ENCODE measurements at regions of chr2 and their contacts with region 1.

Region 1: GRCh38 chr2:113080134-113080533 is 12.4 kb downstream of the IL1F10 start:
- DNase-seq: peak; percentile 75
- H3K4me3 ChIP-seq: no peak overlapping the region
- H3K27ac ChIP-seq: no peak overlapping the region
- H3K4me1 ChIP-seq: peaks cover 12% of the 10 kb centered on the region
- H3K27me3 ChIP-seq: peaks cover 16% of the 10 kb centered on the region; the same call in 1 of the 2 replicates

Region 2: GRCh38 chr2:112588566-112589045 is 491.5 kb before region 1 on chr2:
- in situ Hi-C with region 1: no loop called
- DNase-seq: no peak
- H3K4me3 ChIP-seq: no peak overlapping the region
- H3K27ac ChIP-seq: no peak overlapping the region
- H3K4me1 ChIP-seq: peaks cover 10% of the 10 kb centered on the region
- H3K27me3 ChIP-seq: no peaks in the 10 kb centered on the region

Region 3: DNA sequence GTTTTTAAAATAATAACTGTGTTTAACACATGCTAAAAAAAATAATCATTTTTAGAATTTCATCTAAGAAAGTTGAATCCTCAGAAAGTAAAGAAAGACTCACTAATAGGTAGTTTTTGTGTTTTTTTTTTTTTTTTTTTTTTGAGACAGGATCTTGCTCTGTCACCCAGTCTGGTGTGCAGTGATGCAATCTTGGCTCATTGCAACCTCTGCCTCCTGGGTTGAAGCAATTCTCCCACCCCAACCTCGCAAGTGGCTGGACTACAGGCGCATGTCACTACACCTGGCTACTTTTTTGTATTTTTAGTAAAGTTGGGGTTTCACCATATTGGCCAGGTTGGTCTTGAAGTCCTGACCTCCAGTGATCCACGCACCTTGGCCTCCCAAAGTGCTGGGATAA is 322.9 kb before region 1 on chr2:
- in situ Hi-C with region 1: no loop called
- DNase-seq: peak; percentile 24
- H3K4me3 ChIP-seq: no peak overlapping the region
- H3K27ac ChIP-seq: no peak overlapping the region
- H3K4me1 ChIP-seq: no peaks in the 10 kb centered on the region
- H3K27me3 ChIP-seq: no peaks in the 10 kb centered on the region

Region 4: GRCh38 chr2:112811841-112812306 is 268.3 kb before region 1 on chr2:
- in situ Hi-C with region 1: no loop called
- DNase-seq: peak; percentile 74
- H3K4me3 ChIP-seq: no peak overlapping the region
- H3K27ac ChIP-seq: peak overlapping the region; percentile 44
- H3K4me1 ChIP-seq: peaks cover 19% of the 10 kb centered on the region
- H3K27me3 ChIP-seq: no peaks in the 10 kb centered on the region

Region 5: DNA sequence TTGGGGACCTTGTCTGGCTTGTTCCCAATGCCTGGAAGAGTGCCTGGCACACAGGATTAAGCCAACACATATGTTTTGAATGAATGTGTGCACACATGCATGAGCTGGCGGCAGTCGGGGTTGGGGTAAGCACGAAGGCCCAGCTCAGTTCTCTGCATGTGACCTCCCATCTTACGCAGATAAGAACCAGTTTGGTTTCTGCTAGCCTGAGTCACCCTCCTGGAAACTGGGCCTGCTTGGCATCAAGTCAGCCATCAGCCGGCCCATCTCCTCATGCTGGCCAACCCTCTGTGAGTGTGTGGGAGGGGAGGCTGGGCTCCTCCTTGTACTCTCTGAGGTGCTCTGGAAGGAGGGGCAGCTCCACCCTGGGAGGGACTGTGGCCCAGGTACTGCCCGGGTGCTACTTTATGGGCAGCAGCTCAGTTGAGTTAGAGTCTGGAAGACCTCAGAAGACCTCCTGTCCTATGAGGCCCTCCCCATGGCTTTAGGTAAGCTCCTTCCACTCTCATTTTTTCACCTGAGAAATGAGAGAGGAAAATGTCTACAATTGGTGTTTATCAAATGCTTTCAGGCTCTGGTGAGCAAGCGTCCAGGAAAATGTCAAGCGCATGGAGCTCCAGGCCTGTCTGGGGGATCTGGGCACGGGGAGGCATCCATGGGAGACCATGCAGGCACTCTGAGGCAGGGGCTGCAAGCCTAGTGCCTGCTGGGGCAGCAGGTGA is 37.6 kb after region 1 on chr2:
- in situ Hi-C with region 1: loop called (anchors 5 kb)
- DNase-seq: peak; percentile 98
- H3K4me3 ChIP-seq: no peak overlapping the region
- H3K27ac ChIP-seq: peak overlapping the region; percentile 70
- H3K4me1 ChIP-seq: peaks cover 9% of the 10 kb centered on the region
- H3K27me3 ChIP-seq: no peaks in the 10 kb centered on the region